ENCODE measurements at regions of chr18 and their contacts with region 1.

Region 1: DNA sequence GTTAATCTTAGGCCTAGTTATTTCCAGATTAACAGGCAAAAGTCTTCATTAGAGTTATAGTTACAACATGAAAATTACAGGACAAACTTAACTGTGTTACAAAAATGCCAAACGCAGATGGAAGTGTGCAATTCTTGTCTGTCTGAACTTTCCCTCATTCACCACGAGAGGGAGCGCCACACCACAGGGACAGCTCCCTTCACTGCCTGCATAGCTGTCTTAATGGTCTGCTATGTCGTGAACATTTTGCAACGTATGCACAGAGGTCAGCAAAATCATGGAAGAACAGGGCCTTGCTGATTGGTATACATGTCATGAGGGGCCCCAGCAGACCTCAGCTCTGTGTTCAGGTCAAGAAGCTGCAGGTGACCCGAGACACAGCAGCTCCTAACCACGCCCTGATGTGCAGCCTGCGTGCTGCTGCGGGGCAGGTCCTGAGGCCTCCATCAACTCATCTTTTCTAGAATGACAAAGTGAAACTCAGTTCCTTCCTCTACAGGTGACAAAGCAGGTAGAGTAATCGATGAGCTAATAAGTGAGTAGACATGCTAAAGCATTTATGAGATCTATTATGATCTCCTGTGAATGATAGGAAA is 78.8 kb upstream of the ATP8B1 start:
- DNase-seq: peak in 1 of 2 experiments; percentile 61
- H3K4me3 ChIP-seq: no peak overlapping the region
- H3K27ac ChIP-seq: no peak overlapping the region
- H3K4me1 ChIP-seq: no peaks in the 10 kb centered on the region
- H3K27me3 ChIP-seq: no peaks in the 10 kb centered on the region
- CTCF ChIP-seq: peak; percentile 85 to 95 (median 93)
- EP300 ChIP-seq: no peak
- POLR2A ChIP-seq: no peak
- RAD21 ChIP-seq: peak; percentile 90 to 96

Region 2: GRCh38 chr18:57859314-57859713 is 22.6 kb before region 1 on chr18:
- CTCF ChIA-PET with region 1: interaction called, 12 read pairs
- POLR2A ChIA-PET with region 1: no interaction called
- DNase-seq: no peak
- H3K4me3 ChIP-seq: no peak overlapping the region
- H3K27ac ChIP-seq: no peak overlapping the region
- H3K4me1 ChIP-seq: no peaks in the 10 kb centered on the region
- H3K27me3 ChIP-seq: no peaks in the 10 kb centered on the region
- CTCF ChIP-seq: peak in 2 of 3 experiments; percentile 25 to 71; a peak in 3 of 4 replicates
- EP300 ChIP-seq: no peak
- POLR2A ChIP-seq: no peak
- RAD21 ChIP-seq: peak; percentile 67 to 72

Region 3: GRCh38 chr18:57898506-57899124 is 16.7 kb after region 1 on chr18:
- CTCF ChIA-PET with region 1: interaction called, 34 read pairs
- POLR2A ChIA-PET with region 1: no interaction called
- DNase-seq: no peak
- H3K4me3 ChIP-seq: no peak overlapping the region
- H3K27ac ChIP-seq: no peak overlapping the region
- H3K4me1 ChIP-seq: no peaks in the 10 kb centered on the region
- H3K27me3 ChIP-seq: no peaks in the 10 kb centered on the region
- CTCF ChIP-seq: no peak
- EP300 ChIP-seq: no peak
- POLR2A ChIP-seq: no peak
- RAD21 ChIP-seq: no peak

Region 4: DNA sequence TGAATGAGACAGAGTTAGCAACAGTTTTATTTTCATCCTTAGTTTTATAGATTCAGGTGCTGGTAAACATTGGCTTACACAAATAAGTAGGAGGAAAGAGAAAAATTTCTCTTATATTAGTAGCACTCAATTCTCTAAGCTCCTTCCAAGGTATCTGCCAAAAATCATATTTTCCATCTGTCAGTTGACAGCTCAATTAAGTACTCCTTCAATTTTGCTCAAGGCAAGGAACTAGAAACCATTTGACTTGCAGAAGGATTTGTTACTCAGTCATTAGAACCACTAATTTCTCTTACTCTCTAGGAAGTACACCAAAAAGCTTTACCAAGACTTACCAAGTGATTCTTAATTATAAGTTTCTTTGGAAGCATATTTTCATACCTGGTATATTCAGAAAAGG is 22.6 kb after region 1 on chr18:
- CTCF ChIA-PET with region 1: interaction called, 17 read pairs
- POLR2A ChIA-PET with region 1: interaction called, 3 read pairs
- DNase-seq: no peak
- H3K4me3 ChIP-seq: no peak overlapping the region
- H3K27ac ChIP-seq: no peak overlapping the region
- H3K4me1 ChIP-seq: peaks cover 0 to 4% (median 0%) of the 10 kb centered on the region in 4 experiments; a peak in 2 of 7 replicates
- H3K27me3 ChIP-seq: no peaks in the 10 kb centered on the region
- CTCF ChIP-seq: no peak
- EP300 ChIP-seq: no peak
- POLR2A ChIP-seq: no peak
- RAD21 ChIP-seq: no peak

Region 5: GRCh38 chr18:58180738-58181353 is 298.9 kb after region 1 on chr18:
- CTCF ChIA-PET with region 1: interaction called, 11 read pairs
- POLR2A ChIA-PET with region 1: no interaction called
- DNase-seq: peak in 1 of 2 experiments; percentile 82
- H3K4me3 ChIP-seq: no peak overlapping the region
- H3K27ac ChIP-seq: no peak overlapping the region
- H3K4me1 ChIP-seq: peaks cover 0 to 17% (median 7%) of the 10 kb centered on the region in 4 experiments; a peak in 4 of 7 replicates
- H3K27me3 ChIP-seq: no peaks in the 10 kb centered on the region
- CTCF ChIP-seq: peak in 2 of 3 experiments; percentile 76 to 87; a peak in 3 of 4 replicates
- EP300 ChIP-seq: no peak
- POLR2A ChIP-seq: no peak
- RAD21 ChIP-seq: peak; percentile 74 to 83

Region 6: GRCh38 chr18:58241877-58242276 is 360.0 kb after region 1 on chr18:
- CTCF ChIA-PET with region 1: no interaction called
- POLR2A ChIA-PET with region 1: no interaction called
- DNase-seq: no peak
- H3K4me3 ChIP-seq: no peak overlapping the region
- H3K27ac ChIP-seq: no peak overlapping the region
- H3K4me1 ChIP-seq: peaks cover 0 to 6% (median 2%) of the 10 kb centered on the region in 4 experiments; a peak in 6 of 7 replicates
- H3K27me3 ChIP-seq: no peaks in the 10 kb centered on the region
- CTCF ChIP-seq: no peak
- EP300 ChIP-seq: no peak
- POLR2A ChIP-seq: no peak
- RAD21 ChIP-seq: no peak

Measured in H1 (cell line).